HEK293 (cell line): ENCODE measurements at regions of chr5 and their contacts with region 1.

Region 1: DNA sequence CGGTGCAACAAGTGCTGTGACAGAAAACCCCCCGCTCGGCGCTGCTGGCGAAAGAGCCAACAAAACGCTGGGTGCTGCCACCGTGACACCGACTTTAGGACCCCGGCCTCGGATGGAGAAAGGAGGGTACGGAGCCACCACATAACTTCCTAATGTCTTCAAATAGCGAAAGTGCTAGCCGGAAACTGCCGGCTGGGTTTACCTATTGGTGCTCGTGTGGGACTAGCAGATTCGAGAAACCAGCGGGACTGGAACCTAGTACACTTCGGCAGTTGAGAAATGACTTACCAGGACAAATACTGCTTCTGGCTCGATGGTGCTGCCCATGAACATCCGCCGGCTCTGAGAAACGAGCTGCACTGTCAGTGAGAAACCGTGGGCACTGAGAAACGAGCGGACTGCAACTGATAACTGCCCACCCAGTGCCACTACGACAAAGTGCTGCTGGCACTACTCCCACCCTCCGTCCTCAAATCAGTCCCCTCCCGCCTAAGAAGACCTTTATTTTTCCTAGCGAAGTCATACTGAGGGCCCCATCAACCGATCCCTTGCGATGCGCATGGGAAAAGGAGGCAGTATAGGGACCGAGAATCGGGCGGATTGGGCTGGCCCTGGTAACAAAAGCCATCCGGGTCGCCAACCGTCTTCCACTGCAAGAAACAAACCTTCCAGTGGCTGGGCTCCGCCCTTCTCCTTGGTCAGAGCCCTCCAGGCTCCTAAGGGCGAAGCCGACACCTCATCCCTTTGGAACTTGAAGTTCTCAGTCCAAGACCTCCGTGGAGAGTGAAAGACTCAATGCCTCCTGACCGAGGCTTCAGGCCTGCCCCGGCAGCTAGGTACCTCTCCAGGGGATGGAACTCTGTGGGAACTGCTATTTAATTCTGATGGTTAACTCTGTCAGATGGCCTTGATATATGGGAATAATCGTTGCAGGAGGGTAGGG is 27.0 kb upstream of the ANXA2R start:
- H3K4me3 ChIP-seq: peak overlapping the region; percentile 63
- H3K27ac ChIP-seq: peak overlapping the region; percentile 87
- H3K4me1 ChIP-seq: peaks cover 2% of the 10 kb centered on the region; the same call in 1 of the 2 replicates
- CTCF ChIP-seq: no peak

Region 2: DNA sequence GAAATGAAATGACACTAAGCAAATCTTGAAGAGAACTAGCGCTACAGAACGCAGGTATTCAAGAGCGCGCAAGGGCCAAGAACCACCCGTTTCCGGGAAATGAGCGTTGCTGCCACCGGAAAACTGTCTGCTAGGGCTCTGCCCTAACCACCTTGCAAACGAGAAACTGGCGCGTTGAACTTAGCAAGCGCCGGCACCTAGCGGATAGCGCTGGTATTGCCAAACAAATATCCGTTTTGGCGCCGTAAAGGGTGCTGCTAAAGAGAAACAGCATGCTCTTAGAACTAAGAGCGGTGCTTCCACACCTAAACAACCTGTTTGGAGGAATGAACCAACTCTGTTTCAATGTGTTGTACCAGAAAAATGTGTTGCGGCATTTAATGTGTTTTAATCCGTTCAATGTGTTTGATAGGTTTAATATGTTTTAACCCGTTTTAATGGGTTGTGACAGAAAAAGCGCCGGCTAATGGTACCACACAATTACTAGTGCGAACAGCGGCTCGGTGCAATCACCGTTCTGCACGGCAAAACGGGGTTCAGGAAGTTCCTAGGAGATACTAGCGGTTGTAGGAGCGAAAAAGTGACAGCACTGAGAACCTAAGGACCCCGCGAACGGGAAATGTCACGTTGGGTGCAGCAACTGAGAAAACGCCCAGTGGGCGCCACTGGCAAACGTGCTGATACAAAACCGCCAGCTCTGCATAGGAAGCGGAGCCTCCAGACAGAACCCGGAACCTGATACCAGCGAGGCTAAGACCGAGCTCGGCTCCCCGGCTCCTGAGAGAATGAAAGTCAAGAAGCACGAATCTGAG is 26.6 kb before region 1 on chr5 and contains the start of gene ANXA2R:
- CTCF ChIA-PET with region 1: interaction called, 33 read pairs
- POLR2A ChIA-PET with region 1: interaction called, 28 read pairs
- H3K4me3 ChIP-seq: peak within 1 kb of the TSS; percentile 56
- H3K27ac ChIP-seq: peak within 1 kb of the TSS; percentile 84
- H3K4me1 ChIP-seq: no peaks in the 10 kb centered on the region
- CTCF ChIP-seq: peak; percentile 79

Region 3: GRCh38 chr5:43244823-43245565 is 177.9 kb after region 1 on chr5:
- CTCF ChIA-PET with region 1: no interaction called
- POLR2A ChIA-PET with region 1: no interaction called
- H3K4me3 ChIP-seq: no peak overlapping the region
- H3K27ac ChIP-seq: no peak overlapping the region
- H3K4me1 ChIP-seq: no peaks in the 10 kb centered on the region
- CTCF ChIP-seq: no peak

Region 4: DNA sequence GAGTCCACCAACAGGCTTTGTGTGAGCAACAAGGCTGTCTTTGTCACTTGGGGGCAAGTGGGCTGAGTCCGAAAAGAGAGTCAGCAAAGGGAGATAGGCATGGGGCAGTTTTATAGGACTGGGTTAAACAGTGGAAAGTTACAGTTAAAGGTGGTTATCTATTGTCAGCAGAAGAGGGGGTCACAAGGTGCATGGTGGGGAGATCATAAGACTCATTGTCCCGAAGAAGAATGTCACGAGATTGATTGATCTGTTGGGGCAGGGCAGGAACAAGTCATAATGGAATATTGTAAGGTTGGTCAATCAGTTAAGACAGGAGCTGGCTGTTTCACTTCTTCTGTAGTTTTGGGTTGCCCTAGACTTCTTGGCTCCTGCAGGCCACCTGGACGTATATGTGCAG is 253.8 kb after region 1 on chr5:
- CTCF ChIA-PET with region 1: no interaction called
- POLR2A ChIA-PET with region 1: no interaction called
- H3K4me3 ChIP-seq: no peak overlapping the region
- H3K27ac ChIP-seq: no peak overlapping the region
- H3K4me1 ChIP-seq: no peaks in the 10 kb centered on the region
- CTCF ChIP-seq: no peak